ENCODE measurements at regions of chr7 and their contacts with region 1.

Region 1: DNA sequence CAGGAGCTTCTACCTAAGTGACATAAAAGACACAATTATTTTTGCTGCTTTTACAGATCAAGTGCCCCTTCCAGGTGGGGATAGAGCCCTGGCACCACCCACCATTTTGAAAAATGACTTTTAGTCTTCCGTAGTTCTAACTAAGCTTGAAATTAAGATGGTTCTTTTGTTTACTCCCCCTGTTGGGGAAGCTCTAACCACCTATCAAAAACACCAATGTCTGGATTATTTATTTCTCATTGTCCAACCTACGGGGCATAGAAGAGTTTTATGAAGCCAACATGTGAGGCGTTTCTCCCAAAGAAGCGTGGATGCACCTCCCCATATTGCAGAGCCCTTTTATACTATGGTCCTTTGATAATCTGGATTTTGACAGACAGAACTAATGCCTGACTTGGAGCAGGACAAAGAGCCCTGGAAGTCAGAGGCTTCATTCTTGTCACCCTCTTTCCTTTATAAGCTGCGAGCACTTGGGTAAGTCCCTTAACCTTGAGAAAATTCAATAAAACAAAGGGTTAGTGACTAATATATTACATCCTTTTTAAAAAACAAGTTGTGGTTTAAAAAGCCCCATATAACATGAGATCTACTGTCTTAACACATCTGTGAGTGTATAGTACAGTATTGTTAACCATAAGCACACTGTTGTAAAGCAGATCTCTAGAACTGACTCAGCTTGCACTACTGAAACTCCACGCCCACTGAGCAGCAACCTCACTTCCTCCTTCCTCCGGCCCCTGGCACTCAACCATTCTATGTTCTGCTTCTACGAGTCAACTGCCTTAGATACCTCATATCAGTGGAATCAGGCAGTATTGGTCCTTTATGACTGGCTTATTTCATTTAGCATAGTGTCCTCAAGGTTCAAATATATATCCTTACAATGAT is 67.5 kb downstream of the ATXN7L1 start:
- DNase-seq: peak; percentile 77
- H3K4me3 Mint-ChIP-seq: peak overlapping the region; percentile 45
- H3K27ac Mint-ChIP-seq: peak overlapping the region; percentile 75
- H3K4me1 Mint-ChIP-seq: peaks cover 77% of the 10 kb centered on the region
- H3K27me3 Mint-ChIP-seq: peaks cover 1% of the 10 kb centered on the region

Region 2: GRCh38 chr7:104956753-104957450 is 852.0 kb before region 1 on chr7:
- intact Hi-C with region 1: loop called (anchors 5 kb)
- DNase-seq: peak; percentile 62
- H3K4me3 Mint-ChIP-seq: peak overlapping the region; percentile 69
- H3K27ac Mint-ChIP-seq: peak overlapping the region; percentile 100
- H3K4me1 Mint-ChIP-seq: peaks cover 67% of the 10 kb centered on the region
- H3K27me3 Mint-ChIP-seq: no peaks in the 10 kb centered on the region

Region 3: DNA sequence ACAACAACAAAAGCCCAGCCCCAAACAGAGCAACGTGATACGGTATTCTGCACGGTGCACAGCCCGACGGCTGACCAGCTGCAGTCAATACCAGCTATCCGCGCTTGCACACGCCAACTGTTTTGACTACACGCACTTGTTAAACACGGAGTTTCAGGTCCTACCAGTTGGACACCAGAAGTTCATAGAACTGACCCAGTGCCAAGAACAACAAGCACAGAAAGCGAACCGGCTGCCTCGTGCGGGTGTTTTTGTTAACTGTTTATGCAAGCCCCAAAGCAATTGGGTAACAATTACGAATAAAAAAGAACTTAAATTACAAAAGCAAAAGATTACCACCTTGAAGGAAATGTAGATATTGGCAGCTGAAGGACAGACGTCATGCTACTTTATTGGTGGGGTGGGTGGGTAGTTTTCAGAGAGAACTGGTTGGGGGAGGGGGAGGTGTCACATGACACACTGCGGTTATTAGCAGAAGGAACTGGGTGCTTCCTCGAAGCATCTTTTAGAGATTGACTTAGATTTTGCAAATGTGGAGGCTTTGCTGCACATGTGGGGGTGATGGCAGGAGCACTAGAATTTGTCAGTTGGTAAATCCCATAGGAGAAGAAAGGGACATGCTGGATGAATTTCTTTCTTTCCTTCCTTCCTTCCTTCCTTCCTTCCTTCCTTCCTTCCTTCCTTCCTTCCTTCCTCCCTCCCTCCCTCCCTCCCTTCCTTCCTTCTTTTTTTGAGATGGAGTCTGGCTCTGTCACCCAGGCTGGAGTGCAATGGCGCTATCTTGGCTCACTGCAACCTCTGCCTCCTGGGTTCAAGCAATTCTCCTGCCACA is 117.0 kb before region 1 on chr7:
- intact Hi-C with region 1: loop called (anchors 1 kb)
- DNase-seq: no peak
- H3K4me3 Mint-ChIP-seq: peak overlapping the region; percentile 89
- H3K27ac Mint-ChIP-seq: peak overlapping the region; percentile 89
- H3K4me1 Mint-ChIP-seq: peaks cover 35% of the 10 kb centered on the region
- H3K27me3 Mint-ChIP-seq: no peaks in the 10 kb centered on the region

Region 4: DNA sequence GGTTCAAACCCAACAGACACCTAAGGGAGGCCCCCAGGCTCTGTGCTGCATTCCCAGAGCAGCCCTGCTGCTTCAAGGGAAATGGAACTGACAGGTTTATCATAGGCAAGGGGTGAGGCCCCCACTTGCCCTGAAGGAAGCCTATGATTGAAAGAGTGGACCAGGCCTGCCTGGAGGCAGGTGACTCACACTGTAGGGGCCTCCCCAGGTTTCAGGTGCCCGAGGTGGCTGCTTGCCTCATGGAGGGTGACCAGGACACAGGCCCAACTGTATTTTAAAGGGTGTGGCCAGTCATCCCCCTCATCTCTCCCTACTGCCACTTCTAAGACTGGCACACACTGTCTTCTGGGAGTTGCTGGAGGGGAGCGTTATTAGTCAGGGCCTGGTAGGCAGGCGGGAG is 18.0 kb before region 1 on chr7:
- intact Hi-C with region 1: no loop called
- DNase-seq: no peak
- H3K4me3 Mint-ChIP-seq: no peak overlapping the region
- H3K27ac Mint-ChIP-seq: no peak overlapping the region
- H3K4me1 Mint-ChIP-seq: no peaks in the 10 kb centered on the region
- H3K27me3 Mint-ChIP-seq: peaks cover 16% of the 10 kb centered on the region

Region 5: DNA sequence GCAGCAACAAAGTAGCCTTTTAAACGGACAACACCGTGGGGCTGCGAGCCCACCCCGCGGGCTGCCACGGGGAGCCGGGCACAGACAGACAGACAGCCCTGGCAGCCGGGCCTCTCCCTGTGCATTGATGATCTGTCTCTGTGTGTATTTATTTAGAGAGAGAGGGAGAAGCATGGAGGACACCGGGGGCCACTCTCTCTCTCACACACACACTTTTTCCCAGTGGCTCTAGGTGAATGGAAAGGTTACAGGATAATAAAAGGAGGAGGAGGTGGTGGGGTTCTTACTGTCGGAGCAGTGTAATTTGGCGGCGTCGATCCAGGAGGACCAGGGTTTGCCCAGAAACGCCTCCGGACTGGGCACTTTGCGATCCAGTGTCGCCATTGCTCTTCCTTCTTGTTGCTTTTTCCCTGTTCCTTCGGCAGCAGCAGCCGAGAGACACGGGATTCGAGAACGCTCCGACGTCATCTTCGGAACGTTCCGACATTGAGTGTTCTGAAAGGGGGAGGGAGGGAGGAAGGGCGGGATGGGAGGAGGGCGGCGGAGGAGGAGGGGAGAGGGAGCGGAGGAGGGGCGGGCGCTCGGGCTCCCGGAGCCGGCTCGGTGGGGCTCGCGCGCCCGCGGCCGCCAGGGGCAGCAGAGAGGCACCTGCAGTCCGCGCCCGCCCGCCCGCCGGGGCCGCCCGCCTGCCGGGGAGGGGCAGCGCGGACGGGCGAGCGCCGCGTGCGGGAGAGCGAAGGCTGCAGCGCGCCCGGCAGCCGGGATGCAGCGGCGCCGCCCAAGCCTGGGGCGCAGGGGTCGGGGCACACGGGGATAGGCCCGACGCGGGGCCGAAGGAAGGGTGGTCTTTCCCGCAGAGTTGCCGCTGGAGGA is 67.4 kb after region 1 on chr7 and contains the start of gene ATXN7L1:
- intact Hi-C with region 1: loop called (anchors 1 kb)
- DNase-seq: peak; percentile 80
- H3K4me3 Mint-ChIP-seq: peak within 1 kb of the TSS; percentile 96
- H3K27ac Mint-ChIP-seq: peak within 1 kb of the TSS; percentile 90
- H3K4me1 Mint-ChIP-seq: peaks cover 42% of the 10 kb centered on the region
- H3K27me3 Mint-ChIP-seq: peaks cover 35% of the 10 kb centered on the region
- total RNA-seq, gene ATXN7L1: 7.2 and 8.5 TPM in 2 replicates

Region 6: DNA sequence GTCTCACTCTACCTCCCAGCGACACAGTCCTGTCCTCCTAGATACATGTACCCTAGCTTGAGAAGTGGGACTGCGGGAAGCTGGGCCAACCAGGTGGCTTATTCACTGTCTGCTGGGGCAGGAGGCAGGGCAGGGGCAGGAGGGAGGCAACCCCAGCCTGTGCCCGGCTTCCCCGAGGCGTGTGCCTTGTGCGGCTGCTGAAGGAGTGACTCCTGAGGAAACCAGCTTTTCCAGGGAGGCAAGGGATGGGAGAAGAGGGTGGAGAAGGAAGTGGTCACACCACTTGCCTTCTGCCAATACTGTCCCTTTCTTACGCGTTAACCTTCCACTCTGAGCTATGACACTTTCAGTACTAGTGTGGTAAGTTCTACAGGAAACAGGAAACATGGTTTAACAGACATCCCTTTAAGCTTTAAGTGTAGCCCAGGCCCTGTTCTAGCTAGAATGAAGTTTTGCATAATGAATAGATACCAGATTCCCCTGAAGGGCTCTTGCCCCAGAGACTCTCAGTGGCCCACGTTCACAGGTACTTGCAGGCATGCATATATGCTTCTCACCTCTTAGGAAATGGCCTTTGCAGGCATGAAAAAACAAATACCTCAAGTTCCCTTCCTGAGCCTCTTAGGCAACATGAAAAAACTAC is 262.5 kb after region 1 on chr7:
- intact Hi-C with region 1: loop called (anchors 1 kb)
- DNase-seq: peak; percentile 44
- H3K4me3 Mint-ChIP-seq: peak overlapping the region; percentile 59
- H3K27ac Mint-ChIP-seq: peak overlapping the region; percentile 93
- H3K4me1 Mint-ChIP-seq: peaks cover 42% of the 10 kb centered on the region
- H3K27me3 Mint-ChIP-seq: no peaks in the 10 kb centered on the region

Region 7: GRCh38 chr7:106425017-106425719 is 616.2 kb after region 1 on chr7:
- intact Hi-C with region 1: loop called (anchors 1 kb)
- DNase-seq: peak; percentile 67
- H3K4me3 Mint-ChIP-seq: peak overlapping the region; percentile 67
- H3K27ac Mint-ChIP-seq: peak overlapping the region; percentile 97
- H3K4me1 Mint-ChIP-seq: peaks cover 91% of the 10 kb centered on the region
- H3K27me3 Mint-ChIP-seq: no peaks in the 10 kb centered on the region